ENCODE measurements at regions of chr13 and their contacts with region 1.

Region 1: DNA sequence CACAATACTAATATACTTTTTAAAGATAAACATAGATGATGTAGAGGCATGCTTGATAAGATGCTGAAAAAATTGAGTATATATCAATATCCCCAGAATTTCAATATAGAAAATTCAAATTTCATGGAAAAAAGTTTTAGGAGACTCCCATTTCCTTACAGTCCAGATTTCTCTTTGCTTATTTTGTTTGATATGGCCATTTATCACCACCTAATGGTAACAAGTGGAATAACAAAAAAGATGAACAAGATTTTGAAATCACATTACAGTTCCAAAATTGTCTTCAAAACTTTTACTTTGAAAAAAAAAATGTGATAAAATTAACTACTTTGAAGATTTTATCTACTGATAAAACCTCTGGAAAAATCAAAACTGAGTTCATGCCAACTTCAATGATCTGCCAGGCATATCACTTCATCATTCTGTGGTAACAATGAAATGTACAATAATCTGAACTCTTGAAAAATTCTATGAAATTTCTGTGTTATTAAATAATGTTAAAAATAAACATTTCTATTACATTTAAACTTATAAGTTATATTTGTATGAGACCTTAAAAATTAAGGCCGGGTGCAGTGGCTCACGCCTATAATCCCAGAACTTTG is 17.5 kb downstream of the MIPEP start:
- DNase-seq: peak in 4 of 5 donors; percentile 11 to 28 (median 20)
- H3K4me3 ChIP-seq: no peak overlapping the region
- H3K4me3 Mint-ChIP-seq: no peak overlapping the region
- H3K27ac ChIP-seq: no peak overlapping the region
- H3K27ac Mint-ChIP-seq: no peak overlapping the region
- H3K4me1 ChIP-seq: no peaks in the 10 kb centered on the region
- H3K4me1 Mint-ChIP-seq: no peaks in the 10 kb centered on the region
- H3K27me3 ChIP-seq: no peaks in the 10 kb centered on the region
- H3K27me3 Mint-ChIP-seq: no peaks in the 10 kb centered on the region

Region 2: GRCh38 chr13:23411706-23412105 is 460.0 kb before region 1 on chr13:
- CTCF ChIA-PET with region 1: interaction called, 3 read pairs
- POLR2A ChIA-PET with region 1: no interaction called
- intact Hi-C with region 1: loop called (anchors 1 kb)
- DNase-seq: no peak
- H3K4me3 ChIP-seq: no peak overlapping the region
- H3K4me3 Mint-ChIP-seq: no peak overlapping the region
- H3K27ac ChIP-seq: no peak overlapping the region
- H3K27ac Mint-ChIP-seq: no peak overlapping the region
- H3K4me1 ChIP-seq: no peaks in the 10 kb centered on the region
- H3K4me1 Mint-ChIP-seq: peaks cover 0 to 5% (median 1%) of the 10 kb centered on the region in 4 donors
- H3K27me3 ChIP-seq: no peaks in the 10 kb centered on the region
- H3K27me3 Mint-ChIP-seq: peaks cover 0 to 5% of the 10 kb centered on the region in 2 donors

Region 3: DNA sequence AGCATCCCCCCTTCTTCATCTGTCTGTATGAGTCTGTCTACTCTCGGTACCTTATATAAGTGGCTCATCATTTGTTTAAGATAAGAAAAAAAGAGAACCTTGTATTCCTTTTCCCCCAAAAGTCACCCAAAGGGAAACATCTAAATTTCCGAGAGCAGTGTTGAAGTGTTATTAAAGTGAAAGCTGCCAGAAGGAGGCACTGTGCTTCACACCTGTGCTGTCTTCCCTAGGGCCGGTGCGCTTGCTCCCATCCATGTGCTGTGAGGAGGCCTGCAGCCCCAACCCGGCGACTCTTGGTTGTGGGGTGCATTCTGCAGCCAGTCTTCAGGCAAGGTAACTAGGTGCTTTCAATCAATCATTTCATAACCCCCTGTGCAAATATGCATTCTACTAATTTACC is 204.0 kb before region 1 on chr13:
- CTCF ChIA-PET with region 1: no interaction called
- POLR2A ChIA-PET with region 1: no interaction called
- intact Hi-C with region 1: loop called (anchors 5 kb)
- DNase-seq: no peak
- H3K4me3 ChIP-seq: no peak overlapping the region
- H3K4me3 Mint-ChIP-seq: no peak overlapping the region
- H3K27ac ChIP-seq: no peak overlapping the region
- H3K27ac Mint-ChIP-seq: no peak overlapping the region
- H3K4me1 ChIP-seq: no peaks in the 10 kb centered on the region
- H3K4me1 Mint-ChIP-seq: no peaks in the 10 kb centered on the region
- H3K27me3 ChIP-seq: no peaks in the 10 kb centered on the region
- H3K27me3 Mint-ChIP-seq: peaks cover 6 to 11% of the 10 kb centered on the region in 2 donors

Region 4: DNA sequence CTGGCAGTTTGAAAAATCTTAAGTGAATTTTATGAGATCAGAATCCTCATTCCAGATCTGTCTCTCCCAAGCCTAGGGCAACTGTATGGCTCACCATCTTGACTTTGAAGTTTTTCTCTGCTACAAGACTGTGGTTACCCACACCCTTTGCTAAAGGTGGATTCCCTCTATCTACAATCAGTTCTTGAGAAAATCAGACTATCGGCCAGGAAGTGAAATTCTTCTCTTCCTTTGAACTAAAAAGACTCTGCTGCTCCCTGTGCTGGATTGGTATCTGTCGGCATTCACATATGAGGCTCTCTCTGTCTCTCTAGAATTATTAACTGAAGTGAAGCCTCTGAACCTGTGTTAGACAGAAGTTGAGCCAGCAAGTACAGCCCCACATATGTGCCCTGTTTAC is 128.5 kb before region 1 on chr13:
- CTCF ChIA-PET with region 1: no interaction called
- POLR2A ChIA-PET with region 1: no interaction called
- intact Hi-C with region 1: loop called (anchors 1 kb)
- DNase-seq: peak; percentile 45 to 69 (median 52)
- H3K4me3 ChIP-seq: no peak overlapping the region
- H3K4me3 Mint-ChIP-seq: peak overlapping the region in 7 of 8 donors; percentile 33 to 71 (median 63)
- H3K27ac ChIP-seq: no peak overlapping the region
- H3K27ac Mint-ChIP-seq: peak overlapping the region; percentile 27 to 84 (median 68)
- H3K4me1 ChIP-seq: peaks cover 23% of the 10 kb centered on the region
- H3K4me1 Mint-ChIP-seq: peaks cover 23 to 35% (median 29%) of the 10 kb centered on the region in 4 donors
- H3K27me3 ChIP-seq: no peaks in the 10 kb centered on the region
- H3K27me3 Mint-ChIP-seq: no peaks in the 10 kb centered on the region

Region 5: GRCh38 chr13:23766283-23766682 is 105.4 kb before region 1 on chr13:
- CTCF ChIA-PET with region 1: no interaction called
- POLR2A ChIA-PET with region 1: no interaction called
- intact Hi-C with region 1: no loop called
- DNase-seq: no peak
- H3K4me3 ChIP-seq: no peak overlapping the region
- H3K4me3 Mint-ChIP-seq: no peak overlapping the region
- H3K27ac ChIP-seq: no peak overlapping the region
- H3K27ac Mint-ChIP-seq: no peak overlapping the region
- H3K4me1 ChIP-seq: no peaks in the 10 kb centered on the region
- H3K4me1 Mint-ChIP-seq: peaks cover 0 to 3% (median under 1%) of the 10 kb centered on the region in 4 donors
- H3K27me3 ChIP-seq: no peaks in the 10 kb centered on the region
- H3K27me3 Mint-ChIP-seq: no peaks in the 10 kb centered on the region

Region 6: GRCh38 chr13:23822252-23822824 is 49.4 kb before region 1 on chr13:
- CTCF ChIA-PET with region 1: no interaction called
- POLR2A ChIA-PET with region 1: no interaction called
- intact Hi-C with region 1: no loop called
- DNase-seq: no peak
- H3K4me3 ChIP-seq: no peak overlapping the region
- H3K4me3 Mint-ChIP-seq: no peak overlapping the region
- H3K27ac ChIP-seq: no peak overlapping the region
- H3K27ac Mint-ChIP-seq: no peak overlapping the region
- H3K4me1 ChIP-seq: peaks cover 14% of the 10 kb centered on the region
- H3K4me1 Mint-ChIP-seq: peaks cover 5 to 8% (median 7%) of the 10 kb centered on the region in 4 donors
- H3K27me3 ChIP-seq: no peaks in the 10 kb centered on the region
- H3K27me3 Mint-ChIP-seq: no peaks in the 10 kb centered on the region

Region 7: DNA sequence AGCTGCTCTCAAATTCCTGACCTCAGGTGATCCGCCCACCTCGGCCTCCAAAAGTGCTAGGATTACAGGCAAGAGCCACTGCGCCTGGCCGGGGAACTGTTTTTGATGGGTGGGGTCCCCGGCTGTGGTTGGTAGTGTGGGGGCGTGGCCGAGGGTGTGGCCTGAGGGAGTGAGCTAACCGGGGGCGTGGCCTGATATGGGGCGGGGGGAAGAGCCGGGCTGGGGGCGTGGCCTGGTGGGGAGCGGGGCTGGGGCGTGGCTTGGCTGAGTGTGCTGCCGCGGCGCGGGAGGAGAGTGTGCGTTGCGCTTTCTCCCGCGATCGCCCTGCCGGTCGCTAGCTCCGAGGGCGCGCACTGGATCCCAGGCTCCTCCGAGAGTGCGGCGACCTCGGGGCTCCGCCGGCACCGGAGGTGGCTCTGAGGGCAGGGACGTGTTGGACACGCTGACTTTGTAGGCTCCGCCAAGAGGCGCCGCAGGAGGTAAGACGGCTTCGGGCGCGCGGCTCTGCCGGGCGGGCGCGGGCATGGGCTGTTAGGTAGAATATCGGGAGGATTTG is 288.8 kb after region 1 on chr13 and contains the start of gene SPATA13:
- CTCF ChIA-PET with region 1: no interaction called
- POLR2A ChIA-PET with region 1: no interaction called
- intact Hi-C with region 1: no loop called
- DNase-seq: peak; percentile 88 to 90 (median 88)
- H3K4me3 ChIP-seq: peak within 1 kb of the TSS; percentile 69
- H3K4me3 Mint-ChIP-seq: peak within 1 kb of the TSS; percentile 78 to 90 (median 86)
- H3K27ac ChIP-seq: peak within 1 kb of the TSS; percentile 19
- H3K27ac Mint-ChIP-seq: peak within 1 kb of the TSS in 5 of 7 donors; percentile 32 to 83 (median 72)
- H3K4me1 ChIP-seq: peaks cover 19% of the 10 kb centered on the region
- H3K4me1 Mint-ChIP-seq: peaks cover 9 to 16% (median 12%) of the 10 kb centered on the region in 4 donors
- H3K27me3 ChIP-seq: no peaks in the 10 kb centered on the region
- H3K27me3 Mint-ChIP-seq: peaks cover 0 to 2% of the 10 kb centered on the region in 2 donors
- total RNA-seq, gene SPATA13: 107 to 110 TPM

Region 8: DNA sequence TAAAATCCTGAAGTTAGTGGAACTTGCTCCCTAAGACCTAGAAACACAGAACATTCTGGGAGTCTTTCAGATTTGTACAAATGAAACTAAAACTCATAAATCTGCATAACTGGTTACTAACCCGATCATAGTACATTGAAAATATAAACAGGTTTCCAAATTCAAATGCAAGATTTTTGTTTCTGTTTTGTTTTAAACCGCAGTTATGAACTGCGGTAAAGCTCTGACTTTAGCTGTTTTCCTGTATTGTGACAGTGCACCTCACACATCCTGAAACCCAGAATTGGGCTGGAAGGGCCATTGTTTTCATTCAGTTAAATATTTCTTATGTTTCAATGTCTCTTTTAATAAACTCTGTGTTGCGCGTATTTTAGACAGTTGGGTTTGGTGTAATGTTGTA is 1975.4 kb after region 1 on chr13:
- CTCF ChIA-PET with region 1: no interaction called
- POLR2A ChIA-PET with region 1: no interaction called
- intact Hi-C with region 1: no loop called
- DNase-seq: peak; percentile 45 to 71 (median 55)
- H3K4me3 ChIP-seq: peak overlapping the region; percentile 17 to 32
- H3K4me3 Mint-ChIP-seq: peak overlapping the region; percentile 49 to 85 (median 72)
- H3K27ac ChIP-seq: peak overlapping the region; percentile 28
- H3K27ac Mint-ChIP-seq: peak overlapping the region; percentile 74 to 91 (median 89)
- H3K4me1 ChIP-seq: peaks cover 26% of the 10 kb centered on the region
- H3K4me1 Mint-ChIP-seq: peaks cover 21 to 46% (median 32%) of the 10 kb centered on the region in 4 donors
- H3K27me3 ChIP-seq: no peaks in the 10 kb centered on the region
- H3K27me3 Mint-ChIP-seq: peaks cover 0 to 3% of the 10 kb centered on the region in 2 donors